ENCODE measurements at regions of chr15 and their contacts with region 1.

Region 1: DNA sequence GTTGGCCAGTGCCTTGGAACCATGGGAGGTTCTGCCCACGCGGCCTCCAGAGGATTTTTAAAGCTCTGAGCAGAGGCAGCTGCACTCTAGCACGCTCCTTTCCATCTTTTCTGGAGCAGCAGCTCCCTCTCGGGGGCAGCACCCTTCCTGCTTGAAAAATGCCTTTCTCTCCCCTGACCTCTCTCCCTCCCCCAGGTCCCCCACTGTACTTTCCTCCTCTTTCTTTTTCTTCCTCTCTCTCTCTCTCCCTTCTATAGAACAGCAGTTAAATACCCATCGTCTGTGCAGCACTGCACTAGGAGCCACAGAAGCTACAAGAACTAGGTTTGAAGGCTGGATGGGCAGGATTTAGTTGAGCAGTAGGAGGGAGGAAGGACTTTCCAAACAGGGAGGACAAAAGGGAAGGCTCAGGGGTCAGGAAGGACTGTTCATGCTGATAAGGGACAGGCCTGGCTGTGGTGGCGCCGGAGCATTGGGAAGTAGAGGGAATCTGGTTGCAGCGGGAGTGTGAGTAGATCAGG is 4.4 kb downstream of the ALPK3 start:
- DNase-seq: no peak
- CTCF ChIP-seq: no peak

Region 2: DNA sequence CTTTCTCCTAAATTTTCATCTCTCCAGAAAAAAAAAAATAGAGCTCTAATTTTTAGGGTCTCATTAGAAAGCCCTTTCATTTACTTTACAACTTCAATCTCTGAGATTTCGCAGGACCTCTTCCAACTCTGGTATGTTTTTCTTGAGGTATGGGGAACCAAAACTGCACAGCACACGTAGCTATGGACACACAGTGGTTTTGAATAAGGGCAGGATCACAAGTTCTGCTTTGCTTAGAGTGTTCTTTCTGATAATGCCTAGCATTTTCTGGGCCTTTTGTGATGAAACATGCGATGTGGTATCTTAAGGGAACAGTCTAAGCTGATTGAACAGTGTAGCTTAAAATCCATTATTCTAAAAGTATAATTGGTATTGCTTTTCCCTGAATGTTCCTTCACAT is 47.8 kb before region 1 on chr15:
- CTCF ChIA-PET with region 1: no interaction called
- POLR2A ChIA-PET with region 1: no interaction called
- DNase-seq: no peak
- CTCF ChIP-seq: no peak

Region 3: DNA sequence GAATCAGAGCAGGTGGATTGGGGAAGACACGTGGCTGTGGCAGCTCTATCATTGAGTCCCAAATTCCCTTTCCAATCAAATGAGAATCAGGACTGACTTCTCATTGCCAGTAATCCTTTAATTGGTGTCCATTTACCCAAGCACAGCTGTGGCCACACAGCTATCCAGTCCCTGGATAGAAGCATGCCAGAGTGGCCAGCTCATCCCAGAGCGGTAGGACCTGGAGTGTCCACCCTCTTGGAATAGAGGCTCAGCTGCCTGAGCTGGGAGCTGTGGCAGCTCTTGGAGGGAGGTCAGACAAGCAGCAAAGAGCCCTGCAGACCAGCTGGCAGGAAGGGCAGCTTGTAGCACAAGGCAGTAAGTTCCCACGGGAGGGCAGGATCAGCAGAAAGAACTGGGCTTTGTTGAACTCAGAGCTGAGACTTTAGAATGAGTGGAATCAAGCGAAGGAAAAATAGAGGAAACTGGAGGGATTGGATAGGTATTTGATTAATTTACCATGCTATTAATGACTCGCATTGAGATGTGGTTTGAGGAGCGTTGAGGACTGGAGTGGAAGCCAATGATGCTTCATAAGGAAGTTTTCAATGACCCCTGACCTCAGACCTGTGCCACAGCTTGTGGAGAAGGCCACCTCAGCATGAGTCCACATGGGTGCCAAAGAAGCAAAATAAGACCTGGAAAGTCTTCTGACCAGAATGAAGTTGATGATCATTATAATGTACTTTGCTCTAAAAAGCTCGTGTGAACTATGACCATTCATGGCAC is 11.3 kb before region 1 on chr15:
- CTCF ChIA-PET with region 1: interaction called, 11 read pairs
- POLR2A ChIA-PET with region 1: no interaction called
- DNase-seq: no peak
- CTCF ChIP-seq: no peak

Region 4: DNA sequence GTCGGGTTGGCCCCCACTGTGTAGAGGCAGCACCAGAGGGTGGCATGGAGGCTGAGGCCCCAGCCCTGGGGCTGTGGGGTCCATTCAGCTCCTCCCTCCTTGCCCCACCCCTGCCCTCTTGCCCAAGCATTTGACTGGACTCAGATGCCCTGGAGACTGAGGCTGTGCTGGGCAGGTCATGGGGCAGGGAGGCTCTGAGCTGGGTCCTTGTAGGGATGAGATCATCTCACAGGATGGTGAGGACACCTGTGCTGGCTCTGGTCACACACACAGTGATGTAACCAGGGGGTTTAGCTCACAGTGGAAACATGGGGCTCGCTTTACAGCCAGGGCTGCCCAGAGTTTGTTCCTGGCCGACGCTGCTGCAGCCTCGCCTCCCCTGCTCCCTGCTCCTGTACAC is 13.4 kb after region 1 on chr15:
- CTCF ChIA-PET with region 1: interaction called, 14 read pairs
- POLR2A ChIA-PET with region 1: no interaction called
- DNase-seq: no peak
- CTCF ChIP-seq: no peak